Activated T-helper 2 cell treated with anti-CD3 and anti-CD28 coated beads, Interferon-gamma antibody, Interleukin-2, Interleukin-4, amounts not matched to agents 10 μg/mL and 5 μg/mL and 100 μg/mL, durations not matched to agents 14 hours and 24 hours and 36 hours (primary cell): ENCODE measurements at regions of chr10 and their contacts with region 1.

Region 1: DNA sequence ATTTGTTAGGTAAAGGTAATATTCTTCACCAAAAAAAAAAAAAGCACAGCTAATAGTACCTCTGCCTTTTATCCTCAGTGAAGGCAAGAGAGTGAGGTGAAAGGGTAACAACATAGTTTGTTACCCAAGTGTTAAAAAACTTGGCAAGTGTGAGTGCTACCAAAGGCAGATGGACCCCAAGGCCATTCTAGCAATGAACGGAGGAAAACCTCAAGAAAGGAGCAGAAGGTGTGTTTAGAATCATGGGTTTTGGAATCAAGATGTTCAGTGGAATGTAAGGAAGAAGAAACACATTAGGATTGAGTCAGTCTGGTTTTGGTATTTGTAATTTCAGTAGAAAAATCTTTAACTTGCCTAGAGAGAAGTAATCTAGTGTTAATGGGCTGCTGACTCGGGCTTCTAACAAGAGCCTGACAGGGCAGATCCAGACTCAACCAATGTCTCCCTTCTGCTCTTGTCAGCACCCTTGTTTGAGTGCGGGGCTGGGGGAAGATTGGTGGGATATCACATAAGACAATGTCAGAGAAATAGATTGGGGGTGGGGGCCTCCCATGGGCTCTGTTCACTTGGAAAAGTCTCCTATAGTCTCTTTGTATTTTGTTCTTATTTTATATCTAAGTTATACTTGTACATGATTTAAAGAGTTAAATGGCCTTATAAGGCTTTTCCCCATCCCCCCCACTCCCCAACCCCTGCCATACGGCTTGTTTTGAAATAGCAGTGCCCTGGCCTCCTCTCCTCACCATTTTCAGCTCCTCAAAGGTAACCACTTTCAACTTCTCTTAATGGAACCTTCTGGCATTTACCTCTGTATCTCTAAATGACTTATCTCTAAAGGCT is 44.4 kb downstream of the SCD start:
- DNase-seq: no peak
- H3K4me3 Mint-ChIP-seq: no peak overlapping the region
- H3K27ac Mint-ChIP-seq: peak overlapping the region; percentile 43
- H3K4me1 Mint-ChIP-seq: peaks cover 15% of the 10 kb centered on the region
- H3K27me3 Mint-ChIP-seq: no peaks in the 10 kb centered on the region

Region 2: GRCh38 chr10:100346765-100347567 is 44.4 kb before region 1 on chr10 and contains the start of gene SCD:
- intact Hi-C with region 1: loop called (anchors 5 kb)
- DNase-seq: peak; percentile 90
- H3K4me3 Mint-ChIP-seq: peak within 1 kb of the TSS; percentile 100
- H3K27ac Mint-ChIP-seq: peak within 1 kb of the TSS; percentile 92
- H3K4me1 Mint-ChIP-seq: peaks cover 57% of the 10 kb centered on the region
- H3K27me3 Mint-ChIP-seq: no peaks in the 10 kb centered on the region
- total RNA-seq, gene SCD: 273 and 278 TPM in 2 replicates

Region 3: GRCh38 chr10:100598166-100598565 is 206.8 kb after region 1 on chr10:
- intact Hi-C with region 1: no loop called
- DNase-seq: no peak
- H3K4me3 Mint-ChIP-seq: no peak overlapping the region
- H3K27ac Mint-ChIP-seq: no peak overlapping the region
- H3K4me1 Mint-ChIP-seq: no peaks in the 10 kb centered on the region
- H3K27me3 Mint-ChIP-seq: peaks cover 15% of the 10 kb centered on the region